ENCODE measurements at regions of chr3 and their contacts with region 1.

Region 1: DNA sequence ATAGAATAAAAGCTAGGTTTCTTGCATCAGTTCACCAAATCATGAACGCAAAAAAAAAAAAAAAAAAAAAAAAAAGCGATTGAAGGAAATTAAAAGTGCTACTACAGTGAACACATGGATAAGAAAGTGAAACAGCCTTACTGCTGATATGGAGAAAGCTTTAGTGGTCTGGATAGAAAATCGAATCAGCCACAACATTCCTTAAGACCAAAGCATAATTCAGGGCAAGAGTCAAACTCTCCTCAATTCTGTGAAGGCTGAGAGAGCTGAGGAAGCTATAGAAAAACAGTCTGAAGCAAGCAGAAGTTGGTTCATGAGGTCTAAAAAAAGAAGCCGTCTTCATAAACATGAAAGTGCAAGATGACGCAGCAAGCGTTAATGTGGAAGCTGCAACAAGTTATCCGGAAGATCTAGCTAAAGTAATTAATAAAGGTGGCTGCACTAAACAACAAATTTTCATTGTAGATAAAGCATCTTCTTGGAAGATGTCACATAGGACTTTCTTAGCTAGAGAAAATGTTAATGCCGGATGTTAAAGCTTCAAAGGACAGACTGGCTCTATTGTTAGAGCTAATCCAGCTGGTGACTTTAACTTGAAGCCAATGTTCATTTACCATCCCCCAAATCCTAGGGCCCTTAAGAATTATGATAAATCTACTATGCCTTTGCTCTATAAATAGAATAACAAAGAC is 19.2 kb downstream of the P3H2 start:
- DNase-seq: no peak
- ATAC-seq: peak in 1 of 4 donors; percentile 47
- H3K4me3 ChIP-seq: no peak overlapping the region
- H3K27ac ChIP-seq: no peak overlapping the region
- H3K4me1 ChIP-seq: no peaks in the 10 kb centered on the region
- H3K27me3 ChIP-seq: no peaks in the 10 kb centered on the region
- CTCF ChIP-seq: no peak

Region 2: GRCh38 chr3:190048932-190049441 is 52.5 kb before region 1 on chr3:
- intact Hi-C with region 1: loop called in 1 of 3 experiments (anchors 5 kb)
- DNase-seq: no peak
- ATAC-seq: no peak
- H3K4me3 ChIP-seq: no peak overlapping the region
- H3K27ac ChIP-seq: no peak overlapping the region
- H3K4me1 ChIP-seq: no peaks in the 10 kb centered on the region
- H3K27me3 ChIP-seq: no peaks in the 10 kb centered on the region
- CTCF ChIP-seq: no peak

Measured in pancreas (tissue), 10 donors.